Transverse colon (tissue), 4 donors: ENCODE measurements at regions of chr19 and their contacts with region 1.

Region 1: GRCh38 chr19:22526661-22527272 is 104.6 kb upstream of the ZNF98 start:
- DNase-seq: no peak
- H3K4me3 ChIP-seq: peak overlapping the region in 1 of 4 donors; percentile 1
- H3K27ac ChIP-seq: peak overlapping the region in 3 of 4 donors; percentile 40 to 60 (median 58)
- H3K4me1 ChIP-seq: no peaks in the 10 kb centered on the region
- H3K27me3 ChIP-seq: no peaks in the 10 kb centered on the region
- CTCF ChIP-seq: no peak
- EP300 ChIP-seq: no peak
- POLR2A ChIP-seq: no peak

Region 2: DNA sequence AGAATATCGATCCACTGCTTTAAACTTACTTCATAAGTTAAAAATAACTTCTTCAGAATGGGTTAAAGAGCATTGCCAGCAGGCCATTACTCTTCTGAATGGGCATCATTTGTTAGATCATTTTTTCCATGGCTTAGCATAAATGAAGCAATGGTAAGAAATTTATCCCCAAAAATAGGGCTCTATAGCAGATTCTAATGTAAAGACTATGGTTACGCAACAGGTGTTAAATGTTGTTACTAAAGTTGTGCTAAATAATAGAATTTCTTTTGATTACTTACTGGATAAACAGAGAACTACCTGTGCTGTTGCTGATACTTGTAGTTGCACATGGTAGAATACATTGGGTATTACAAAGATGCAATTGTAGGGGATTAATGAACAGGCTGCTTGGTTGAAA is 88.8 kb before region 1 on chr19:
- in situ Hi-C with region 1: no loop called
- intact Hi-C with region 1: no loop called
- DNase-seq: no peak
- H3K4me3 ChIP-seq: no peak overlapping the region
- H3K27ac ChIP-seq: no peak overlapping the region
- H3K4me1 ChIP-seq: no peaks in the 10 kb centered on the region
- H3K27me3 ChIP-seq: no peaks in the 10 kb centered on the region
- CTCF ChIP-seq: no peak
- EP300 ChIP-seq: no peak
- POLR2A ChIP-seq: no peak

Region 3: DNA sequence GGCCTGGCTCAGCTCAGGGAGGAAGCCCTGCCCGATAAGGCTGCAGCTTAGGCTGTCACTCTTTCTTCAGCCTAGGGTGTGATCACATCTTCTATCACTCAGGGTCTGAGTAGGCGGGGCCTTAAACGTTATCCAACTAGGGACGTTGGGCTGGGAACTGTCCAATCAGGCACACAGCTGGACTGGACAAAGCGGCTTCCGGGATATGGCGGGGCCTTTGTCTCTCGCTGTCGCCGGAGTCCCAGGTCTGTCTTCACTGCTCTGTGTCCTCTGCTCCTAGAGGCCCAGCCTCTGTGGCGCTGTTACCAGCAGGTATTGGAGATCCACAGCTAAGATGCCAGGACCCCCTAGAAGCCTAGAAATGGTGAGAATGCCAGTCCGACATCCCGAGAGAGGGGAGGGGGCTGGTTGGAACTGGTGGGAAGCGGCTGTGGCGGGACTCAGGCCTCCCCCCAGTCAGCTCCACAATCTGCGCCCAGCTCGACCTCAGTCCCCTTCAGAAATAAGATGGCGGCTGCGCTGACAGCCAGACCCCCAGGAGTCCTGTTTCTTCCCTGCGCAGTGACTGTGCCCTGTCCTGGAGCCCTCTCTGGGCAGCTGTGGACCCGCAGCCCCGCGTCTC is 1560.3 kb after region 1 on chr19 and contains the start of gene ZNF254:
- in situ Hi-C with region 1: no loop called
- intact Hi-C with region 1: loop called (anchors 10 kb)
- DNase-seq: peak; percentile 89
- H3K4me3 ChIP-seq: peak within 1 kb of the TSS; percentile 47 to 78 (median 64)
- H3K27ac ChIP-seq: peak within 1 kb of the TSS; percentile 81 to 89 (median 86)
- H3K4me1 ChIP-seq: peaks cover 0 to 11% (median 8%) of the 10 kb centered on the region in 4 donors
- H3K27me3 ChIP-seq: no peaks in the 10 kb centered on the region
- CTCF ChIP-seq: peak in 2 of 5 experiments; percentile 12 to 16
- EP300 ChIP-seq: no peak
- POLR2A ChIP-seq: peak; percentile 87
- total RNA-seq, gene ZNF254: 5.2 to 25.1 (median 21.4) TPM